ENCODE measurements at regions of chr6 and their contacts with region 1.

Region 1: DNA sequence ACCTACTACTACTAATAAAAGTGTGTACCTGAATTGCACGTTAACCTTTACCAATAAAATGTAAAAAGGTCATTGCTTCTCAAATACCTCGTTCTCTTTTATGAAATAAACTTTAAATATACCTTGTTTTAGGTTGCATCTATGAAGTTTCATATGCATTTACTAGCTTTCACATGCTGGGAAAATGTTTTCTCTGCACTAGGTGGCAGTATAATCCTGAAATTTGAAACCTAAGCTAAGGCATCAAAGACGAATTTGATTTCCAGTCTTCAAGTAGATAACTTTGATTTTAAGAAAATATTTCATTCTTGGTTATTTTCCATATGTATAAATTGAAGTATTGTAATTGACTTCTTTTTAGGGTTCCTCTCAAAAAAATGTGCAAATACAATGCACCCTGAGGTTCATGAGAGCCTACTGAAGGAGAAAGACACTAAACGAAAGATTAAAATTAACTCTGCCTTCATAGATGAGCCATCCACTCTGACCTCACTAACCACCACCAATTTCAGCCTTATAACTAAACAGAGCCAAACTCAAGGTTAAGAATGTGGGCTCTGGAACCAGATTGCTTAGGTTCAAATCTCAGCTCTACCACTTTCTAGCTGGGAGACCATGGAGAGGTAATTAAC is 7.3 kb upstream of the COL9A1 start:
- DNase-seq: peak in 1 of 2 experiments; percentile 48
- H3K4me3 ChIP-seq: no peak overlapping the region
- H3K27ac ChIP-seq: no peak overlapping the region
- H3K4me1 ChIP-seq: no peaks in the 10 kb centered on the region
- H3K27me3 ChIP-seq: peaks cover 49% of the 10 kb centered on the region
- CTCF ChIP-seq: peak; percentile 78

Region 2: DNA sequence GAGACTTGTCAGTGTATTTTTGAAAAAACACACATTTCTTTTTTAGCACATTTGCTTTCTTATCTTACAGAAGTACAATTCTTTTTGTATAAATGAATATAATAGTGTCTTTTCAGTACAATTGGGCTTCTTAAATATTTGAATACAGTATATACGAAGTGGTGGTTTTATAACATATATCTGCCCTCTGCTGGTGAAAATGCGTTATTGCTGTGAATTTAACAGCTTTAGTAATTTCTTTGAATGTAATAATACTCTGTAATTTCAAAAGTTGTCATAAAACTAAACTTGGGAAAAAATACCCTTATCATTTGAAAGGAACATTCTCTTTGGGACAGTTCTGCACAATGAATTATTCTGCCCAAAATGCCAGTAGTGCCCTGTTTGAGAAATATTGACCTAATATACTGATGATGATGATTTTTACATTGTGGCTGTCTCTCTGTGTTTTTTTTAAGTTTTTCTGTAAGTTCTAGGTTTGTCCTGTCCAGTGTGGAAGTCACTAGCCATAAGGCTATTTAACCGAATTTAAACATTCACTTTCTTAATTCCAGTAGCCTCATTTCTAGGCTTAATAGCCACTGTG is 376.5 kb after region 1 on chr6:
- CTCF ChIA-PET with region 1: no interaction called
- POLR2A ChIA-PET with region 1: interaction called, 3 read pairs
- intact Hi-C with region 1: loop called (anchors 5 kb)
- DNase-seq: peak in 1 of 2 experiments; percentile 40
- H3K4me3 ChIP-seq: no peak overlapping the region
- H3K27ac ChIP-seq: no peak overlapping the region
- H3K4me1 ChIP-seq: peaks cover 6% of the 10 kb centered on the region
- H3K27me3 ChIP-seq: no peaks in the 10 kb centered on the region
- CTCF ChIP-seq: peak; percentile 90

Region 3: GRCh38 chr6:70884074-70884983 is 574.1 kb after region 1 on chr6:
- CTCF ChIA-PET with region 1: interaction called, 4 read pairs
- POLR2A ChIA-PET with region 1: no interaction called
- intact Hi-C with region 1: loop called (anchors 1 kb)
- DNase-seq: peak in 1 of 2 experiments; percentile 52
- H3K4me3 ChIP-seq: no peak overlapping the region
- H3K27ac ChIP-seq: no peak overlapping the region
- H3K4me1 ChIP-seq: no peaks in the 10 kb centered on the region
- H3K27me3 ChIP-seq: no peaks in the 10 kb centered on the region; the same call in 1 of the 2 replicates
- CTCF ChIP-seq: peak; percentile 96

Region 4: DNA sequence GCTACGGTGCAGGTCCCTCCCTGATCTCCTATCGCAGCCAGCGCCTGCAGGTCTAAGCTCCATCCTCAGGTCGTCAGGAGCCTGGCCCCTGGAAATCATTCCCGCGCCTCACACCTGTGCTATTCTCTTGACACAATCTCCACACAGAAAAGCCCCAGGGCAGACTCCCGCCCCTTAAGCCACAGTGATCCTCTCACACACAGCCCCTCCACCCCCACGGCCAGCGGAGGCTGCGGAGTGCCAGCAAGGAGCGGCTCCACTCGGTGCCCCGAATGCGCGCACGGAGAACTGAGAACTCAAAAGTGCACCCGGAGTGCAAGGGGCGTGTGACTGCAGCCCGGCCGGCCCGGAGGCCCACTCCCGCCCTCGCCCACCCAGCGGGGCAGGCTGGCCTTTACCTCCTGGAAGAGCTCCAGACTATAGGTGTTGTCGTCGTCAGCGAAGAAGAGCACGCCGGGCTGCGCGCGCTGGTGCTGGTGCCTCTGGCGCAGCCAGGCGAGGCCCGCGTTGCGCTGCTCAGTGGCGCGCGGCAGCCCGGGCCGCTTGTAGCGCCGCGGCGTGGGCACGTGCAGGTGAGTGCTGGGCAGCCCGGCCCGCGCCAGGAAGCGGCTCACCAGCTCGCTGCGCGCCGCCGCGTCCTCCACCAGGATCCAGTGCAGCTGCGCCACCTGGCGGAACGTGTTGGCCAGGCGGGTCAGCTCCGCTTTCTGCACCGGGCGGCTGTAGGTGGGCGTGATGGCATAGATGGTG is 645.4 kb after region 1 on chr6:
- CTCF ChIA-PET with region 1: interaction called, 6 read pairs
- POLR2A ChIA-PET with region 1: no interaction called
- intact Hi-C with region 1: loop called (anchors 5 kb)
- DNase-seq: peak in 1 of 2 experiments; percentile 79
- H3K4me3 ChIP-seq: peak overlapping the region; percentile 8; the same call in 1 of the 2 replicates
- H3K27ac ChIP-seq: no peak overlapping the region
- H3K4me1 ChIP-seq: no peaks in the 10 kb centered on the region
- H3K27me3 ChIP-seq: peaks cover 14% of the 10 kb centered on the region
- CTCF ChIP-seq: peak; percentile 71

Measured in PC-9 (cell line).